Mammary epithelial cell (primary cell): ENCODE measurements at regions of chrX and their contacts with region 1.

Region 1: GRCh38 chrX:131763674-131764073 is 219.8 kb downstream of the OR13H1 start:
- DNase-seq: peak; percentile 77
- H3K4me3 ChIP-seq: peak overlapping the region; percentile 5 to 41 (median 19)
- H3K27ac ChIP-seq: no peak overlapping the region
- H3K4me1 ChIP-seq: peaks cover 7% of the 10 kb centered on the region
- H3K27me3 ChIP-seq: no peaks in the 10 kb centered on the region
- CTCF ChIP-seq: peak; percentile 40 to 74

Region 2: GRCh38 chrX:131595120-131595519 is 168.6 kb before region 1 on chrX:
- CTCF ChIA-PET with region 1: no interaction called
- dilution Hi-C with region 1: no loop called
- in situ Hi-C with region 1: no loop called
- intact Hi-C with region 1: no loop called
- DNase-seq: no peak
- H3K4me3 ChIP-seq: no peak overlapping the region
- H3K27ac ChIP-seq: no peak overlapping the region
- H3K4me1 ChIP-seq: no peaks in the 10 kb centered on the region
- H3K27me3 ChIP-seq: peaks cover 3% of the 10 kb centered on the region
- CTCF ChIP-seq: no peak

Region 3: GRCh38 chrX:131704136-131704695 is 59.5 kb before region 1 on chrX:
- CTCF ChIA-PET with region 1: no interaction called
- dilution Hi-C with region 1: no loop called
- in situ Hi-C with region 1: no loop called
- intact Hi-C with region 1: loop called (anchors 1 kb)
- DNase-seq: peak; percentile 69
- H3K4me3 ChIP-seq: peak overlapping the region; percentile 49 to 55 (median 51)
- H3K27ac ChIP-seq: peak overlapping the region; percentile 12
- H3K4me1 ChIP-seq: no peaks in the 10 kb centered on the region
- H3K27me3 ChIP-seq: no peaks in the 10 kb centered on the region
- CTCF ChIP-seq: peak; percentile 45 to 56

Region 4: DNA sequence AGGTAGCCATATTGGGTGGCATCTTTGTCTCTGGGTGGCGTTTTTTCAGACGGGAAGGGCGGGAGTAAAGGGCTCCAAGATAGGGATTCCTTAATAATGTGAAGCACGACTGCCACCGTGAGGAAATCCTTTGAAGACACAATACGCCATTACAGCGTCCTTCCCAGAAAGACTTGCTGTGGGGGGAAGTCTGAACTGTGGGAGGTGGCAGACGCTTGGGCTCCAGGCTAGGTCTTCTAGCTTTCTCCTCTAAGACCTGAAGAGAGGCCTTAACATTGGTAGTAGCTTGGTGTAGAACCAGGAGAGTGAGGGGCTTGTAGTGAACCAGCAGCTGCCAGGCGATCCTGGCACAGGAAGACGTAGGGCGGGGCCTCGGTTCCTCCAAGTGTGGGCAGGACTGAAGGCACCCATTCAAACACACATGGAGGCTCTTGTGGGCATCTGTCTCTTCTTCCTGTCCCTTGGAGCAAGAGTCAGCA is 22.5 kb before region 1 on chrX:
- CTCF ChIA-PET with region 1: no interaction called
- dilution Hi-C with region 1: no loop called
- in situ Hi-C with region 1: no loop called
- intact Hi-C with region 1: loop called (anchors 1 kb)
- DNase-seq: peak; percentile 79
- H3K4me3 ChIP-seq: no peak overlapping the region
- H3K27ac ChIP-seq: no peak overlapping the region
- H3K4me1 ChIP-seq: no peaks in the 10 kb centered on the region
- H3K27me3 ChIP-seq: no peaks in the 10 kb centered on the region
- CTCF ChIP-seq: no peak

Region 5: GRCh38 chrX:131778269-131779218 is 14.9 kb after region 1 on chrX:
- CTCF ChIA-PET with region 1: no interaction called
- dilution Hi-C with region 1: no loop called
- in situ Hi-C with region 1: no loop called
- intact Hi-C with region 1: loop called (anchors 1 kb)
- DNase-seq: peak; percentile 70
- H3K4me3 ChIP-seq: peak overlapping the region; percentile 36 to 50 (median 49)
- H3K27ac ChIP-seq: peak overlapping the region; percentile 70
- H3K4me1 ChIP-seq: peaks cover 4% of the 10 kb centered on the region
- H3K27me3 ChIP-seq: no peaks in the 10 kb centered on the region
- CTCF ChIP-seq: peak; percentile 21 to 45

Region 6: GRCh38 chrX:131821945-131822622 is 58.4 kb after region 1 on chrX:
- CTCF ChIA-PET with region 1: interaction called, 4 read pairs
- dilution Hi-C with region 1: no loop called
- in situ Hi-C with region 1: no loop called
- intact Hi-C with region 1: loop called (anchors 1 kb)
- DNase-seq: peak; percentile 69
- H3K4me3 ChIP-seq: peak overlapping the region; percentile 36 to 48 (median 45)
- H3K27ac ChIP-seq: peak overlapping the region; percentile 55
- H3K4me1 ChIP-seq: no peaks in the 10 kb centered on the region
- H3K27me3 ChIP-seq: no peaks in the 10 kb centered on the region
- CTCF ChIP-seq: peak; percentile 31 to 43